CD14-positive monocyte (primary cell): ENCODE measurements at regions of chr16 and their contacts with region 1.

Region 1: GRCh38 chr16:58336332-58337089 is 41.7 kb upstream of the PRSS54 start:
- DNase-seq: peak; percentile 39 to 65 (median 54)
- H3K4me3 ChIP-seq: no peak overlapping the region
- H3K4me3 Mint-ChIP-seq: peak overlapping the region in 1 of 2 donors; percentile 85
- H3K27ac ChIP-seq: no peak overlapping the region
- H3K27ac Mint-ChIP-seq: peak overlapping the region in 1 of 7 donors; percentile 23
- H3K4me1 ChIP-seq: peaks cover 0 to 4% of the 10 kb centered on the region in 2 donors
- H3K4me1 Mint-ChIP-seq: peaks cover 7% of the 10 kb centered on the region
- H3K27me3 ChIP-seq: peaks cover 0 to under 1% of the 10 kb centered on the region in 2 donors
- H3K27me3 Mint-ChIP-seq: peaks cover 4 to 17% (median 6%) of the 10 kb centered on the region in 3 donors
- CTCF ChIP-seq: peak; percentile 90

Region 2: GRCh38 chr16:58487566-58488351 is 151.2 kb after region 1 on chr16:
- intact Hi-C with region 1: loop called (anchors 1 kb)
- DNase-seq: peak; percentile 47 to 64 (median 52)
- H3K4me3 ChIP-seq: no peak overlapping the region
- H3K4me3 Mint-ChIP-seq: peak overlapping the region in 1 of 2 donors; percentile 46
- H3K27ac ChIP-seq: no peak overlapping the region
- H3K27ac Mint-ChIP-seq: no peak overlapping the region
- H3K4me1 ChIP-seq: peaks cover 0 to 4% of the 10 kb centered on the region in 2 donors
- H3K4me1 Mint-ChIP-seq: no peaks in the 10 kb centered on the region
- H3K27me3 ChIP-seq: no peaks in the 10 kb centered on the region
- H3K27me3 Mint-ChIP-seq: peaks cover 11 to 20% (median 15%) of the 10 kb centered on the region in 3 donors
- CTCF ChIP-seq: peak; percentile 92

Region 3: GRCh38 chr16:58859958-58860669 is 523.6 kb after region 1 on chr16:
- intact Hi-C with region 1: no loop called
- DNase-seq: peak in 2 of 3 donors; percentile 6 to 18
- H3K4me3 ChIP-seq: no peak overlapping the region
- H3K4me3 Mint-ChIP-seq: peak overlapping the region in 1 of 2 donors; percentile 66
- H3K27ac ChIP-seq: no peak overlapping the region
- H3K27ac Mint-ChIP-seq: no peak overlapping the region
- H3K4me1 ChIP-seq: peaks cover 7 to 10% of the 10 kb centered on the region in 2 donors
- H3K4me1 Mint-ChIP-seq: peaks cover 18% of the 10 kb centered on the region
- H3K27me3 ChIP-seq: no peaks in the 10 kb centered on the region
- H3K27me3 Mint-ChIP-seq: peaks cover 0 to 2% (median 0%) of the 10 kb centered on the region in 3 donors
- CTCF ChIP-seq: no peak